WTC11 (cell line): ENCODE measurements at regions of chr1 and their contacts with region 1.

Region 1: DNA sequence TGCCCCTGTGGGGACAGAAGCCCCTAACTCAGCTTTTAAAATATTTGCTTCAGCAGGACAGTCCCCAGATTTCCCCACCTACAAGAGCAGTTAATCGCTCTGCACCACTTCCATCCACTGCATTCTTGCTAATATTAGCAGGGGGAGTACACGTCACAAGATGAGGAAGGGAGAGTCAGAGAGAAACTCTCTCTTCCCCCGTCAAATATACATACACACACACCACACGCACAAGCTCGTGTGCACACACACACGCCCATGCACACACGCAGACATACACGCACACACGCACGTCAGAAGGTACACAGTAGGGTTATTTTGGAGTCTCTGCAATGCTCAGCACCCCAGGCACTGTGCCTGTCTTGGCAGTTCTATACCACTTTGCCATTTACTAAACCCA is 2.1 kb downstream of the CLCA1 start:
- DNase-seq: no peak
- ATAC-seq: no peak
- H3K4me3 Mint-ChIP-seq: no peak overlapping the region
- H3K27ac Mint-ChIP-seq: no peak overlapping the region
- H3K4me1 Mint-ChIP-seq: peaks cover 5% of the 10 kb centered on the region; the same call in 1 of the 2 replicates
- H3K27me3 Mint-ChIP-seq: no peaks in the 10 kb centered on the region
- CTCF ChIP-seq: no peak

Region 2: DNA sequence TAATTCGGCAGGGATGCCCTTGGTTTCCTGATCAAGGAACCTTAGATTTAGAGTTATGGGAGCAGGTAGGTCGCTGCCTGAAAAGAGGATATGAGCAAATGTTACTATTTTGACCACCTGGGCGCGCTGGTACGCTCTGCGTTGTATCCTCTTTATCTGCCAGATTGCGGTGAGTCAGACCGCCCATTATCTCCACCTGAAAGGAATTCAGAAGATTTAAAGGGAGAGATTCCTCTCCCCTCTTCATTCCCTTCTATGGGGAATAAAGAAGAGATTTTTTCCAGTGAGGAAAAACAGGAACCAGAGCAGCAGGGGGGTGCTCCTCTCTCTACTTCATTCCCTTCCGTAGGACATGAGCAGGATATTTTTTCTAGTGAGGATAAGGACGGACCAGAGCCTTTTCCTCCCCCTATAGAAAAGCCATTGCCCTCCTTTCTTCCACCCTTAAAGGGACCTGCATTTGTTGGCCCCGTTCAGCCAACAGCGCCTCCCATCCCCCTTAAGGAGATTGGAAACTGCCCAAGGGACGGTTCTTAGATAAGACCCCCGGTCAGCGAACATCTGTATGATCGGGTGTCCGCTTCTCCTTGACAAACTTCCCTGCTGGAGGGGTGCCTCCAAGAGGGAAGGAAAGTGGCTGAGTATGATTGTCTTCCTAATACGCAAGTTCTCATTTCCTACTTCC is 32.0 kb after region 1 on chr1:
- CTCF ChIA-PET with region 1: interaction called, 10 read pairs
- POLR2A ChIA-PET with region 1: no interaction called
- DNase-seq: peak; percentile 68
- ATAC-seq: peak; percentile 83
- H3K4me3 Mint-ChIP-seq: peak overlapping the region; percentile 87
- H3K27ac Mint-ChIP-seq: peak overlapping the region; percentile 98
- H3K4me1 Mint-ChIP-seq: peaks cover 41% of the 10 kb centered on the region
- H3K27me3 Mint-ChIP-seq: no peaks in the 10 kb centered on the region; the same call in 1 of the 2 replicates
- CTCF ChIP-seq: no peak

Region 3: GRCh38 chr1:86552366-86552765 is 81.5 kb after region 1 on chr1:
- CTCF ChIA-PET with region 1: no interaction called
- POLR2A ChIA-PET with region 1: no interaction called
- DNase-seq: no peak
- ATAC-seq: no peak
- H3K4me3 Mint-ChIP-seq: no peak overlapping the region
- H3K27ac Mint-ChIP-seq: no peak overlapping the region
- H3K4me1 Mint-ChIP-seq: peaks cover 9% of the 10 kb centered on the region
- H3K27me3 Mint-ChIP-seq: no peaks in the 10 kb centered on the region
- CTCF ChIP-seq: no peak